Caco-2 (cell line): ENCODE measurements at regions of chr20 and their contacts with region 1.

Region 1: GRCh38 chr20:47356526-47357295 is at the start of gene ZMYND8:
- DNase-seq: peak; percentile 98 to 100
- H3K4me3 ChIP-seq: peak within 1 kb of the TSS; percentile 40
- H3K4me3 Mint-ChIP-seq: peak within 1 kb of the TSS; percentile 95
- H3K27ac Mint-ChIP-seq: peak within 1 kb of the TSS; percentile 100
- H3K4me1 ChIP-seq: peaks cover 68% of the 10 kb centered on the region
- H3K4me1 Mint-ChIP-seq: peaks cover 73% of the 10 kb centered on the region
- H3K27me3 ChIP-seq: no peaks in the 10 kb centered on the region
- H3K27me3 Mint-ChIP-seq: no peaks in the 10 kb centered on the region
- CTCF ChIP-seq: no peak
- total RNA-seq, gene ZMYND8: 180 and 194 TPM in 2 replicates

Region 2: DNA sequence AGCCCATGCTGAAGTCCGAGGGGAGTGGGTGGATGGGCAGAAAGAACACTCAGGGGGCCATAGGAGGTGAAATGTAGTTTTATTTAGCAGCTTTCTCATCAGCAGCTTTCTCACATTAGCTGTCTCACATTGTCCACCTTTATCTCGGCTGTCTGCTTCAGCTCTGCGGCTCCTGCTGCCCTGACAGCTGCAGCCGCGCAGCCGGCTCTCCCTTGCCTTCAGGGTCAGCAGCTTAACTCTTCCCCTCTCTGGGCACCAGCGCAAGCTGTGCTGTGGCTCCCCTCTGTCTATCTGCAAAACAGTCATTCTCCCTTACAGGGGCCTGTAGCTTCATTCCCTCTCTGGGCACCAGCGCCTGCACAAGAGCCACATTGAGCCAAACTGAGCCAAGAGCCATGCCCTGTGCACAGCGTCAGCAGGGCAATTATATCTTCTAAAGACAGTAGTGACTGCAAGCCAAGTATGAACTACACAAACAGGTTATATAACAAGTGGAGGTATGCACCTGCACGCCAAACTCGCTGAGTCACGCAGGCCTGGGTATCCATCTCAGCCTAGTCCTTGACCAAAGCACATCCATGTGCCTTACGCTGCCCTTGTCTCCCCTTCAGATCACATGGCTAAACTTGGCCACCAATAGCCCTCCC is 263.3 kb before region 1 on chr20:
- CTCF ChIA-PET with region 1: no interaction called
- POLR2A ChIA-PET with region 1: no interaction called
- intact Hi-C with region 1: no loop called
- DNase-seq: no peak
- H3K4me3 ChIP-seq: no peak overlapping the region
- H3K4me3 Mint-ChIP-seq: no peak overlapping the region
- H3K27ac Mint-ChIP-seq: no peak overlapping the region
- H3K4me1 ChIP-seq: no peaks in the 10 kb centered on the region
- H3K4me1 Mint-ChIP-seq: no peaks in the 10 kb centered on the region
- H3K27me3 ChIP-seq: no peaks in the 10 kb centered on the region
- H3K27me3 Mint-ChIP-seq: peaks cover 5% of the 10 kb centered on the region
- CTCF ChIP-seq: no peak

Region 3: GRCh38 chr20:47196091-47197081 is 160.3 kb before region 1 on chr20:
- CTCF ChIA-PET with region 1: interaction called, 7 read pairs
- POLR2A ChIA-PET with region 1: interaction called, 5 read pairs
- intact Hi-C with region 1: loop called (anchors 1 kb)
- DNase-seq: peak; percentile 90 to 95
- H3K4me3 ChIP-seq: no peak overlapping the region
- H3K4me3 Mint-ChIP-seq: peak overlapping the region; percentile 1
- H3K27ac Mint-ChIP-seq: peak overlapping the region; percentile 44
- H3K4me1 ChIP-seq: peaks cover 25% of the 10 kb centered on the region
- H3K4me1 Mint-ChIP-seq: peaks cover 27% of the 10 kb centered on the region
- H3K27me3 ChIP-seq: no peaks in the 10 kb centered on the region
- H3K27me3 Mint-ChIP-seq: no peaks in the 10 kb centered on the region
- CTCF ChIP-seq: peak; percentile 100

Region 4: GRCh38 chr20:47296950-47297349 is 59.8 kb before region 1 on chr20:
- CTCF ChIA-PET with region 1: no interaction called
- POLR2A ChIA-PET with region 1: interaction called, 11 read pairs
- intact Hi-C with region 1: loop called (anchors 2 kb)
- DNase-seq: peak; percentile 52 to 63
- H3K4me3 ChIP-seq: no peak overlapping the region
- H3K4me3 Mint-ChIP-seq: no peak overlapping the region
- H3K27ac Mint-ChIP-seq: peak overlapping the region; percentile 1
- H3K4me1 ChIP-seq: no peaks in the 10 kb centered on the region
- H3K4me1 Mint-ChIP-seq: no peaks in the 10 kb centered on the region
- H3K27me3 ChIP-seq: no peaks in the 10 kb centered on the region
- H3K27me3 Mint-ChIP-seq: no peaks in the 10 kb centered on the region
- CTCF ChIP-seq: peak; percentile 21 to 62

Region 5: GRCh38 chr20:47317127-47317895 is 39.4 kb before region 1 on chr20:
- CTCF ChIA-PET with region 1: interaction called, 12 read pairs
- POLR2A ChIA-PET with region 1: interaction called, 82 read pairs
- intact Hi-C with region 1: loop called (anchors 1 kb)
- DNase-seq: no peak
- H3K4me3 ChIP-seq: no peak overlapping the region
- H3K4me3 Mint-ChIP-seq: peak overlapping the region; percentile 69
- H3K27ac Mint-ChIP-seq: peak overlapping the region; percentile 97
- H3K4me1 ChIP-seq: peaks cover 97% of the 10 kb centered on the region
- H3K4me1 Mint-ChIP-seq: peaks cover 69% of the 10 kb centered on the region
- H3K27me3 ChIP-seq: no peaks in the 10 kb centered on the region
- H3K27me3 Mint-ChIP-seq: no peaks in the 10 kb centered on the region
- CTCF ChIP-seq: no peak

Region 6: GRCh38 chr20:47336129-47336835 is 20.4 kb before region 1 on chr20:
- CTCF ChIA-PET with region 1: interaction called, 4 read pairs
- POLR2A ChIA-PET with region 1: interaction called, 14 read pairs
- intact Hi-C with region 1: loop called (anchors 1 kb)
- DNase-seq: no peak
- H3K4me3 ChIP-seq: no peak overlapping the region
- H3K4me3 Mint-ChIP-seq: no peak overlapping the region
- H3K27ac Mint-ChIP-seq: peak overlapping the region; percentile 17
- H3K4me1 ChIP-seq: peaks cover 64% of the 10 kb centered on the region
- H3K4me1 Mint-ChIP-seq: peaks cover 59% of the 10 kb centered on the region
- H3K27me3 ChIP-seq: no peaks in the 10 kb centered on the region
- H3K27me3 Mint-ChIP-seq: no peaks in the 10 kb centered on the region
- CTCF ChIP-seq: no peak

Region 7: GRCh38 chr20:47370850-47371676 is 14.4 kb after region 1 on chr20:
- CTCF ChIA-PET with region 1: interaction called, 13 read pairs
- POLR2A ChIA-PET with region 1: interaction called, 140 read pairs
- intact Hi-C with region 1: loop called (anchors 1 kb)
- DNase-seq: no peak
- H3K4me3 ChIP-seq: no peak overlapping the region
- H3K4me3 Mint-ChIP-seq: no peak overlapping the region
- H3K27ac Mint-ChIP-seq: peak overlapping the region; percentile 97
- H3K4me1 ChIP-seq: peaks cover 32% of the 10 kb centered on the region
- H3K4me1 Mint-ChIP-seq: peaks cover 33% of the 10 kb centered on the region
- H3K27me3 ChIP-seq: no peaks in the 10 kb centered on the region
- H3K27me3 Mint-ChIP-seq: no peaks in the 10 kb centered on the region
- CTCF ChIP-seq: no peak

Region 8: GRCh38 chr20:47453142-47453782 is 96.6 kb after region 1 on chr20:
- CTCF ChIA-PET with region 1: interaction called, 4 read pairs
- POLR2A ChIA-PET with region 1: interaction called, 19 read pairs
- intact Hi-C with region 1: loop called (anchors 1 kb)
- DNase-seq: peak; percentile 67 to 82
- H3K4me3 ChIP-seq: no peak overlapping the region
- H3K4me3 Mint-ChIP-seq: peak overlapping the region; percentile 64
- H3K27ac Mint-ChIP-seq: peak overlapping the region; percentile 94
- H3K4me1 ChIP-seq: peaks cover 49% of the 10 kb centered on the region
- H3K4me1 Mint-ChIP-seq: peaks cover 45% of the 10 kb centered on the region
- H3K27me3 ChIP-seq: no peaks in the 10 kb centered on the region
- H3K27me3 Mint-ChIP-seq: no peaks in the 10 kb centered on the region
- CTCF ChIP-seq: no peak